ENCODE measurements at regions of chr1 and their contacts with region 1.

Region 1: GRCh38 chr1:212455803-212456528 is 23.2 kb downstream of the NENF start:
- DNase-seq: peak; percentile 82
- CTCF ChIP-seq: peak; percentile 90

Region 2: GRCh38 chr1:211680752-211681327 is 775.1 kb before region 1 on chr1:
- CTCF ChIA-PET with region 1: interaction called, 107 read pairs
- POLR2A ChIA-PET with region 1: no interaction called
- DNase-seq: peak; percentile 79
- CTCF ChIP-seq: peak; percentile 64

Region 3: DNA sequence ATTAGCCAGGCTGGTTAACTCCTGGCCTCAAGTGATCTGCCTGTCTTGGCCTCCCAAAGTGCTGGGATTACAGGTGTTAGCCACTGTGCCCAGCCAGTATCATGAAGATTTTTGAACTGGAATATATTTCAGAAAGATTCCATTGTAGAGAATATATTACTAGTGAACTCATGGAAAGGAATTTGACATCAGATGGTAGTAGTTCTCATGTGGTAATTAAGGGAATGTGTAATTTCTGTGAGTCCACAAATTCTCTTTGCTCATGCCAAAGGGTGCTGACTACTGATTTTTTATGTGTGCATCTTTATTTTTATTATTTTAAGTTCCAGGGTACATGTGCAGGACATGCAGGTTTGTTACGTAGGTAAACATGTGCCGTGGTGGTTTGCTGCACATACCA is 410.0 kb before region 1 on chr1:
- CTCF ChIA-PET with region 1: interaction called, 10 read pairs
- POLR2A ChIA-PET with region 1: no interaction called
- DNase-seq: no peak
- CTCF ChIP-seq: no peak

Region 4: DNA sequence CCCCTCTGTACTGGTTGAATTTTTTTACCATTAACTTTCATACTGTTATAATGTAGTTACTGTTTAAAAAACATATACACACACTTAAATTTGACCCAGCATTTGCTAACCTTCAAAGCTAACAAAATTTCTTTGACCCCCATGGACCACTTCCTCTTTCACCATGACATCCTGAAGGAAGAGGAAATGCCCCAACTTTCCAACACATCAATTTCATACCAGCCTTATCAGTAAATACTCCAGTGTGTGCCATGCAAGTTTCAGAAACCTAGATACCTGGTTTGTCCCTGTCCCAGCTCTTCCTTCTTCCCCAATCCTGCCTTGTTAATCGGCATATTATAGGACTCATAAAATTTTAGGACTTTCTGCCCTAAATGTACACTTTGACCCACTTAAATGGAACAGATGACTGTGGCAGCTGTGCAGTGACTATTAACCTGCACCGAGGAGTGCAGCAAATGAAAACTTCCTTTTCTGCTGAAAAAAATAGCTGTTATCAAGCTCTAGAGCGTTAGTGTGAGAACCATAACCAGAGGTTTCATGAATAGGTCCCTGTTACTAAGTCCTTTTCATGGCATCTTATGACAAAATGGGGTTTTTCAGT is 366.3 kb before region 1 on chr1:
- CTCF ChIA-PET with region 1: interaction called, 17 read pairs
- POLR2A ChIA-PET with region 1: no interaction called
- DNase-seq: no peak
- CTCF ChIP-seq: no peak

Region 5: GRCh38 chr1:212368073-212368484 is 87.9 kb before region 1 on chr1:
- CTCF ChIA-PET with region 1: interaction called, 48 read pairs
- POLR2A ChIA-PET with region 1: no interaction called
- DNase-seq: peak; percentile 67
- CTCF ChIP-seq: peak; percentile 56

Region 6: GRCh38 chr1:212469701-212470458 is 13.9 kb after region 1 on chr1:
- CTCF ChIA-PET with region 1: interaction called, 190 read pairs
- POLR2A ChIA-PET with region 1: no interaction called
- DNase-seq: no peak
- CTCF ChIP-seq: no peak

Region 7: DNA sequence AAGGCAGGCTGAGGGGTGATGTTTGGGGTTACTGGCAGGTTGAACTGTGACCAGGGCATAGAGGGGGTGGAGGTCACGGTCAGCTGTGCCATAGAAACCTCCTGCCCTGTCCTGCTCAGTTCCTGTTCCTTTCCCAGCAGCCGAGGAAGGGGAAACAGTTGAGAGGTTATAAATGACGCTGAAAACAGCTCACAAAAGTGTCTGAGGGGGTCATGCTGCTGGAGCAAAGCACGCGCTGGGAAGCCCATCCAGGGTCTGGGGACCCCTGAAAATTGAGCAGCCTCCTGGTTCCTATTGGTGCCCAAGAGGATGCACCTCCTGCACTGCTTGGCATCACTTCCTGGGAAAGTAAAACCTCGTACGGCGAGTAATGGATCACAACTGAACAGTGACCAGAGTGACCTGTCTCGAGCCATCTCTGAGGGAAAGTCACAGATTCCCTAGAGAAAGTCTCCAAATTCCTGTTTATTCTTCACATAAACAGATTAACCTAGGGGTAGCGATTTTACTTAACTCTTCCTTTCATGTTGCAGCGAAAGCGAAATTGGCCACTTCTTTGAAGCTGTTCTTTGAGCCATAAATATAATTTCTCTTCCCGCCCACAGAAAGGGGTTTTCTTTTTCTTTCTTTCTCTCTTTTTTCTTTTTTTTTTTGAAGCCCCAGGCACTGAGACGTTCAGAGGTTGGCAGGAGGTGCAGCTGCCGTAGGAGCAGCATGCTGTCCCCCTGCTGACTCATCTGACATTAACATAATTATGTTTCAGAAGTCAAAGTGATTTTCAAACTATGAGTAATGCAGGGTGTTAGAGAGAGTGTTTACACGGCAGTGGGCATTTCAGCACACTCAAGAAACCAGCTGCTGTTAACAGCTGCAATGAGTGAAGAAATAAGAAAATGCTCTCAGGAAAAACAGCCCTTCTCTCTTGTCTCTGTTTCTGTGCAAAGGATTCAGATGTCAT is 110.8 kb after region 1 on chr1:
- CTCF ChIA-PET with region 1: no interaction called
- POLR2A ChIA-PET with region 1: no interaction called
- DNase-seq: peak; percentile 88
- CTCF ChIP-seq: no peak

Region 8: DNA sequence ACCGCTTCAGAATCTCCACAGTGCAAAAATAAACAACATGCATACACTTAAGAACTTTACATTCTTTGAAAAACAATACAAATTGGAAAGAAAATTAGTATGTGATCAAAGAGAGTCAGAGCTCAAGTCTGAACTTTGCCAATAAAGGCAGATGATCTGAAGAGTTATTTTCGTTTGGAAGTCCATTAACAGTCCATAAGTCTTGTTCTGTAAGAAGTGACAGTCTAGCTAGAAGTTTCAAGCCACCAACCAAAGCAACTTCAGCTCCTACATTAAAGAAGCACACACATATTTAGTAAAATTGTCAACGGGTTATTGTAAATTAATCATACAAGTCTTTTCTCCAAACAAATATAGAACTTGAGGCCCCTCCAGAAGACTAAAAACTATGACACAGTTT is 539.0 kb after region 1 on chr1:
- CTCF ChIA-PET with region 1: interaction called, 10 read pairs
- POLR2A ChIA-PET with region 1: no interaction called
- DNase-seq: no peak
- CTCF ChIP-seq: no peak